Activated CD4-positive, alpha-beta T cell treated with anti-CD3 and anti-CD28 coated beads, Interleukin-2, amount 10 ng/mL, durations not matched to agents 7 days and 5 days (primary cell): ENCODE measurements at regions of chr18 and their contacts with region 1.

Region 1: DNA sequence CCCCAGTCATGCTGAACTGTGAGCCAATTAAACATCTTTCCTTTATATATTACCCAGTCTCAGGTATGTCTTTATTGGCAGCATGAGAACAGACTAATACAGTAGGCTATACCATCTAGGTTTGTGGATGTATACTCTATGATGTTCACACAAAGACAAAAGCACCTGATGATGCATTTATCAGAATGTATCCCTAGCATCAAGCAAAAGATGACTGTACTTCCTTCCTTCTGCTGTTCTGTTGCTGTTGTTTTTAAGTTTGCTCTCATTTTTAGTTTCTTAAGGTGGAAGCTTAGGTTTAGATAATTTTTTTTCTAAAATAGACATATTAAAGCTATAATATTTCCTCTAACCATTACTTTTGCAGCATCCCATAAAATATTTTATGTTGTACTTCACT is 12.4 kb downstream of the ZSCAN30 start:
- DNase-seq: no peak
- H3K4me3 Mint-ChIP-seq: no peak overlapping the region
- H3K27ac Mint-ChIP-seq: no peak overlapping the region
- H3K4me1 Mint-ChIP-seq: peaks cover 2% of the 10 kb centered on the region
- H3K27me3 Mint-ChIP-seq: no peaks in the 10 kb centered on the region

Region 2: GRCh38 chr18:35143622-35144596 is 133.7 kb before region 1 on chr18:
- CTCF ChIA-PET with region 1: no interaction called
- POLR2A ChIA-PET with region 1: no interaction called
- DNase-seq: peak; percentile 38
- H3K4me3 Mint-ChIP-seq: no peak overlapping the region
- H3K27ac Mint-ChIP-seq: no peak overlapping the region
- H3K4me1 Mint-ChIP-seq: peaks cover 11% of the 10 kb centered on the region
- H3K27me3 Mint-ChIP-seq: no peaks in the 10 kb centered on the region

Region 3: DNA sequence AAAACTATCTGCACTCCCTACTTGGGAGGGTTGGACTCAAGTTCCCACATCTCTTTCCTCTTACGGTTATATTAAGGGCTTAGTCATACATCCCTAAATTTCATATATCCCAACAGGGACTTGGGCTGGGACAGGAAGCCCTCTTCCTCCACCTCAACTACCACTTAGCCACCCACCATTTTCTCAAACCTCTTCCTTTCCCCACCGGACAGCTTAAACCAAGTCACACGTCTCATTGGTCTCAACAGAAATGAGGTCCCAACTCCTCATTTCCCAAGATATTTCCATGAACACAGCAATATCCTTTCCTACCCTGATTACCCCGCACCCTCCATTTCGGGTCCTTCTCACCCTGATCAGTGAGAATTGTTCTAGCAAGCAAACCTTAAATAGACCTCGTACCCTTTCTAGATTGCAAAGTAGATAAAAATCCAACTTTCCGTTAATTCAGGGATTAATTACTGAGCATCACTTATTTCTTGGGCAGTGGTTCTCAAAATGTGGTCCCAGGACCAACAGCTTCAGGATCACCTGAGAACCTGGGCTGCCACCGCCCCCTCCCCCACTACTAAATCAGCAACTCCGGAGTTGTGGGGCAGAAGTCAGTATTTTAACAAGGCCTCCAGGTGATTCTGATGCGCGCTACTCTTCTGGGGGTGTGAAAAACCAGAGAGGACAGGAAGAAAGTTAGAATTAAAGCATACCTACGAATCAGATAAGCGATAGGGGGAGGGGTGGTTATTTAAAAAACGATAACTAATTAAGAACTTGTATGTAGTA is 11.8 kb after region 1 on chr18:
- CTCF ChIA-PET with region 1: interaction called, 11 read pairs
- POLR2A ChIA-PET with region 1: no interaction called
- DNase-seq: peak; percentile 48
- H3K4me3 Mint-ChIP-seq: peak overlapping the region; percentile 98
- H3K27ac Mint-ChIP-seq: peak overlapping the region; percentile 97
- H3K4me1 Mint-ChIP-seq: peaks cover 44% of the 10 kb centered on the region
- H3K27me3 Mint-ChIP-seq: no peaks in the 10 kb centered on the region